ENCODE measurements at regions of chr10 and their contacts with region 1.

Region 1: DNA sequence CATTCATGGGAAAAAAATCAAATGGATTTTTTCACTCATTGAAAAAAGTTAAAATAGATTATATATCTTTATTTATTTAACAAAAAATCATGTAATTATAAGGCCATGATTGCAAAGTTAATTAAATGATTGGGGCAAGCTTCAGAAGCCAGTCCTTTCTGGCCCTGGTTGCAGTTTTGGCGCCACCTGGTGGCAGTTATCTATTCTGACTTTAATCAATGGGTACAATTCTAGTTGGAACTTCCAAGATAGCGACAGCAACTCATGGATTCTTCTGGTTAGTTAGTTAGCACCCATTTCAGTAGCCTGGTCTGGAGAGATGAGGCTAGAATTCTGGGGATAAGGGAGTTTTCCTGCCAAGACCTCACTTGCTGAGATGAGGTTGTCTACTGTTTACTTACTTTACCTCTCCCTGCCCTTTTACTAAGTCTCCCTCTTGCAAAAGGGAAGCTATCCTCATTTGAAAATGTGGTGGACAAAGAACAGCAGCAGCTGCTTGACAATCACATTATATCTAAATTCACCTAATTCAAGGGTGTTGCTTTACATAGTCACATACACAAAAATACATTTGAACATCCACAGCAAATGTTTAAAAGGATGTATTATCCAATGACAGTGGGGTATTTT is 42.3 kb downstream of the NOC3L start:
- DNase-seq: peak; percentile 82
- ATAC-seq: peak; percentile 61
- H3K4me3 Mint-ChIP-seq: no peak overlapping the region
- H3K27ac Mint-ChIP-seq: no peak overlapping the region
- H3K4me1 Mint-ChIP-seq: peaks cover 3% of the 10 kb centered on the region
- H3K27me3 Mint-ChIP-seq: no peaks in the 10 kb centered on the region
- CTCF ChIP-seq: peak; percentile 94

Region 2: GRCh38 chr10:94279835-94280709 is 40.3 kb before region 1 on chr10:
- CTCF ChIA-PET with region 1: interaction called, 8 read pairs
- POLR2A ChIA-PET with region 1: no interaction called
- intact Hi-C with region 1: loop called (anchors 2 kb)
- DNase-seq: peak; percentile 57
- ATAC-seq: peak; percentile 68
- H3K4me3 Mint-ChIP-seq: no peak overlapping the region
- H3K27ac Mint-ChIP-seq: no peak overlapping the region
- H3K4me1 Mint-ChIP-seq: peaks cover 2% of the 10 kb centered on the region
- H3K27me3 Mint-ChIP-seq: peaks cover 16% of the 10 kb centered on the region
- CTCF ChIP-seq: peak; percentile 90

Region 3: DNA sequence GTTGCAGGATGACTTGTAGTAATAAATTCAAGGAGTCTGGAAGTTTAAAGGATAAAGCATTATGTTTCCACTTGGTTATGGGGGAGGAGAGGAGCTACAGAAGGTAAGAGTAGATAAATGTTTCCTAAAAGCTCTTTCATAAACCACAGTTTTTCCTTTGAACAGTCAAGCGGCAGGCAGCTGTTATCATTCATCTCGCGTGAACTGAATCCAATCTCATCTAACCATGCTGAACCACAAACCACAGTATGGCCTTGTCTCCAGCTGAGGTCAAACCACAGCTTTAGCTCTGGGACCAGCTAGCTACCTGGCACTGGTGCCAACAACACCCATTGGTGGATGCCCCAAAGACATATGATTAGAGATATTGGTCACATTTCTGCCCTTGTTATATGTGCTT is 21.0 kb before region 1 on chr10:
- CTCF ChIA-PET with region 1: interaction called, 13 read pairs
- POLR2A ChIA-PET with region 1: interaction called, 3 read pairs
- intact Hi-C with region 1: no loop called
- DNase-seq: peak; percentile 33
- ATAC-seq: peak; percentile 51
- H3K4me3 Mint-ChIP-seq: no peak overlapping the region
- H3K27ac Mint-ChIP-seq: no peak overlapping the region
- H3K4me1 Mint-ChIP-seq: peaks cover 12% of the 10 kb centered on the region
- H3K27me3 Mint-ChIP-seq: peaks cover 43% of the 10 kb centered on the region
- CTCF ChIP-seq: no peak

Region 4: GRCh38 chr10:94334857-94335256 is 14.5 kb after region 1 on chr10:
- CTCF ChIA-PET with region 1: interaction called, 47 read pairs
- POLR2A ChIA-PET with region 1: interaction called, 5 read pairs
- intact Hi-C with region 1: no loop called
- DNase-seq: no peak
- ATAC-seq: no peak
- H3K4me3 Mint-ChIP-seq: no peak overlapping the region
- H3K27ac Mint-ChIP-seq: no peak overlapping the region
- H3K4me1 Mint-ChIP-seq: no peaks in the 10 kb centered on the region
- H3K27me3 Mint-ChIP-seq: no peaks in the 10 kb centered on the region
- CTCF ChIP-seq: no peak

Region 5: GRCh38 chr10:94362360-94363250 is 42.2 kb after region 1 on chr10 and contains the start of gene NOC3L:
- CTCF ChIA-PET with region 1: interaction called, 12 read pairs
- POLR2A ChIA-PET with region 1: no interaction called
- intact Hi-C with region 1: no loop called
- DNase-seq: peak; percentile 97
- ATAC-seq: peak; percentile 99
- H3K4me3 Mint-ChIP-seq: peak within 1 kb of the TSS; percentile 89
- H3K27ac Mint-ChIP-seq: peak within 1 kb of the TSS; percentile 91
- H3K4me1 Mint-ChIP-seq: peaks cover 36% of the 10 kb centered on the region
- H3K27me3 Mint-ChIP-seq: peaks cover 3% of the 10 kb centered on the region
- CTCF ChIP-seq: peak; percentile 26
- total RNA-seq, gene NOC3L: 45.5 to 46.6 TPM

Measured in activated CD8-positive, alpha-beta T cell treated with anti-CD3 and anti-CD28 coated beads for 36 hours (primary cell).